ENCODE measurements at regions of chr16 and their contacts with region 1.

Region 1: GRCh38 chr16:11356573-11357331 is 11.5 kb downstream of the RMI2 start:
- DNase-seq: peak; percentile 78
- H3K4me3 ChIP-seq: peak overlapping the region; percentile 39
- H3K27ac ChIP-seq: peak overlapping the region; percentile 91
- H3K4me1 ChIP-seq: peaks cover 85% of the 10 kb centered on the region
- CTCF ChIP-seq: peak; percentile 98

Region 2: GRCh38 chr16:10950393-10950792 is 406.4 kb before region 1 on chr16:
- CTCF ChIA-PET with region 1: no interaction called
- POLR2A ChIA-PET with region 1: no interaction called
- intact Hi-C with region 1: loop called (anchors 5 kb)
- DNase-seq: no peak
- H3K4me3 ChIP-seq: no peak overlapping the region
- H3K27ac ChIP-seq: peak overlapping the region; percentile 73
- H3K4me1 ChIP-seq: peaks cover 71% of the 10 kb centered on the region
- CTCF ChIP-seq: no peak

Region 3: DNA sequence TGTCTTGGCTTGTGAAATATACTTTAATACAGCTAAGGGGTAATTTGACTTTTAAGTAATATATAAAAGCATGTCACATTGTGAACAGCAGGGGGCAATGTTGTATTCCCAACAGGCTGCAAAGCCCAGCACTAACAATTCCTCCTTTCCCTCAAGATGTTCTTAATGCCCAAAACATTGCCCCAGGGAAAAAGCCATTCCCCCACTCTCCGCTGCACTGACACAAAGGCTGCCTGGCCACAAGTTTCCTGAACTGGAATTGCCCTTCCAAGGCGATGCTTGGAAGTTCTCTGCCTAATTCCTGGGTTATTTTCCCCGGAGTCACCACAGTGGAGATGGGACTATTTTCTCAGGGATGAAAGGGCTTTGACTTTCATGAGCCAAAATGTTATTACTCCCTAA is 385.2 kb before region 1 on chr16:
- CTCF ChIA-PET with region 1: no interaction called
- POLR2A ChIA-PET with region 1: no interaction called
- intact Hi-C with region 1: loop called (anchors 2 kb)
- DNase-seq: peak; percentile 66
- H3K4me3 ChIP-seq: no peak overlapping the region
- H3K27ac ChIP-seq: no peak overlapping the region
- H3K4me1 ChIP-seq: no peaks in the 10 kb centered on the region
- CTCF ChIP-seq: peak; percentile 91

Region 4: GRCh38 chr16:11152677-11153331 is 203.9 kb before region 1 on chr16:
- CTCF ChIA-PET with region 1: no interaction called
- POLR2A ChIA-PET with region 1: no interaction called
- intact Hi-C with region 1: no loop called
- DNase-seq: no peak
- H3K4me3 ChIP-seq: no peak overlapping the region
- H3K27ac ChIP-seq: no peak overlapping the region
- H3K4me1 ChIP-seq: peaks cover 9% of the 10 kb centered on the region
- CTCF ChIP-seq: no peak

Region 5: GRCh38 chr16:11181899-11182279 is 174.9 kb before region 1 on chr16:
- CTCF ChIA-PET with region 1: no interaction called
- POLR2A ChIA-PET with region 1: no interaction called
- intact Hi-C with region 1: no loop called
- DNase-seq: no peak
- H3K4me3 ChIP-seq: no peak overlapping the region
- H3K27ac ChIP-seq: no peak overlapping the region
- H3K4me1 ChIP-seq: no peaks in the 10 kb centered on the region
- CTCF ChIP-seq: no peak

Region 6: DNA sequence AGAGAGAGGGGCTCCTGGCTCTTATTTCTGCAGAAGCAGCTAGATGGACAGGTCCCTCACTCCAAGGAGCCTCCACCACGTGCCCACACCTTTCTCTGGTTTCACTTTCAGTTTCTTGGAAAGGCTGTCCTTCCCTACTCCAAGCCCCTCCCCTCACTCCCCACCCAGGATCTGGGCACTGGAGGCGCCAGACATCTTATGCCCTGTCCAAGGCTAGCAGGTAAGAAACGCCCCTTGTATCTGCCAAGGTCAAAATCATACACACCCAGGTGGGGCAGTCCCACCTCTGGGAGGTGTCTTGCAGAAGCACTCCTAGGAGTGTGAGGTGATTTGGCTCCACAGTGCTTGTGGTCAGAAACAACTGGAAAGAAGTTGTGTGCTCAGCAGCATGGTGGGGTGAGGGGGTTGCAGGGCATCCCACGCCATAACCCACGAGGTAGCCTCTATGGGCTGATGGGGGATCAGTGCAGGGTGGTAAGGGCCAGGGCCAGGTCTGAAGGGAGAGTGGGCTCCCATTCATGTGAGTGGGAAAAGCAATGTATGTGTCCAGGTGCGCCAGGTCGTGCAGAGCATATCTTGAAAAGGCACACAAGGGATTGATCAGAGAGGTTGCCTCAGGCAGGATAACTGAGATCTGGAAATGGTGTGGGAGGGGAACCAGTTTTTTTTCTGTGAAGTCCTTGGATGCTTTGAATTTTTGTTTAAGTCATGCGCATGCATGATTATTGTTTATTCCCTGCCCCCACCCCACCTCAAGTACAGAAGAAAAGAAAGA is 43.8 kb before region 1 on chr16:
- CTCF ChIA-PET with region 1: no interaction called
- POLR2A ChIA-PET with region 1: interaction called, 17 read pairs
- intact Hi-C with region 1: loop called (anchors 1 kb)
- DNase-seq: no peak
- H3K4me3 ChIP-seq: no peak overlapping the region
- H3K27ac ChIP-seq: peak overlapping the region; percentile 99
- H3K4me1 ChIP-seq: peaks cover 79% of the 10 kb centered on the region
- CTCF ChIP-seq: no peak

Region 7: DNA sequence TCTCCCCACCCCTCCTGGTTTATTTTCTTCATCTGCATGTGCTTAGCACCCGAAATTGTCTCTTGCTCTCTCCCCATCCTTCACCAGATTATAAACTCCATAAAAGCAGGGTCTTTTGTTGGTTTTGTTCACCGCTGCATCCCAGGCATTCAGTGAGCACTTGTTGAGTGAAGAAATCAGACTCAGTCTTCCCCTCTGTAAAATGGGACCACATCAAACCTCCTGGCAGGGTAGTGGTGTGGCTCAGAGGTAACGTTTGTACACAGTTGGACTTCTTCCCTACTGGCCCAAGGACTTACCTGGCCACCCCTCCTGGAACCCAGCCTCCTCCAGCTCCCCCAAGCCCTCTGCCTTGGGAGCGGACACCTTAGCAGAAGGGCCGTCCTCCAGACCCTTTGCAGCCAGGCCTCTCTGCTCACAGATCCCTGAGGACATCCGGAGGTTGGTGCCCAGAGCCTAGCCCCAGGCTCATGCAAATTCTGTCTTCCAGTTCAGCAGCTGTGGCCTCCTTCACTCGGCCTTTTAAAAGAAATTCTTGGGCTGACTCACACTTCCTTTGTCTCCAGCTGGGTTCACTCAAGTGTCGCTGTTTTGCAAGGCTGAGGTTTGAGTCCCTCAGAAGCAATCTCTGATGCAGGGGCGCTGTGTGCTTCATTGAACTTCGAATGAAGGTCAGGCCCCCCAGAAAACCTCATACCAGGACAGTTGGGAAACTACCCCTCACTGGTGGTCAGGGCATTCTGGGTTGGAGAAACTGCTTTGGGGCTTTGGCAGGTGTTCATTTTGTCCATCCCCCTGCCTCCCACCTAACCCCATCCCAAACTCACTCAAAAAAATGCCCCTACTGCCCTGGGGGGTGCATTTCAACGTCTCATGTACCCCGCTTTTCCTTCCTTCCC is 28.3 kb before region 1 on chr16:
- CTCF ChIA-PET with region 1: interaction called, 3 read pairs
- POLR2A ChIA-PET with region 1: interaction called, 5 read pairs
- intact Hi-C with region 1: loop called (anchors 1 kb)
- DNase-seq: peak; percentile 98
- H3K4me3 ChIP-seq: peak overlapping the region; percentile 62
- H3K27ac ChIP-seq: peak overlapping the region; percentile 93
- H3K4me1 ChIP-seq: peaks cover 76% of the 10 kb centered on the region
- CTCF ChIP-seq: peak; percentile 51

Measured in OCI-LY7 (cell line).